Endothelial cell of umbilical vein (primary cell): ENCODE measurements at regions of chr10 and their contacts with region 1.

Region 1: GRCh38 chr10:23994479-23995046 is 214.4 kb upstream of the KIAA1217 start:
- DNase-seq: peak; percentile 4
- H3K4me3 ChIP-seq: no peak overlapping the region
- H3K27ac ChIP-seq: no peak overlapping the region
- H3K4me1 ChIP-seq: no peaks in the 10 kb centered on the region
- H3K27me3 ChIP-seq: no peaks in the 10 kb centered on the region
- CTCF ChIP-seq: peak; percentile 61
- POLR2A ChIP-seq: no peak

Region 2: GRCh38 chr10:23968301-23968700 is 26.3 kb before region 1 on chr10:
- CTCF ChIA-PET with region 1: no interaction called
- POLR2A ChIA-PET with region 1: no interaction called
- dilution Hi-C with region 1: no loop called
- intact Hi-C with region 1: no loop called
- DNase-seq: no peak
- H3K4me3 ChIP-seq: no peak overlapping the region
- H3K27ac ChIP-seq: no peak overlapping the region
- H3K4me1 ChIP-seq: no peaks in the 10 kb centered on the region
- H3K27me3 ChIP-seq: no peaks in the 10 kb centered on the region
- CTCF ChIP-seq: no peak
- POLR2A ChIP-seq: no peak

Region 3: DNA sequence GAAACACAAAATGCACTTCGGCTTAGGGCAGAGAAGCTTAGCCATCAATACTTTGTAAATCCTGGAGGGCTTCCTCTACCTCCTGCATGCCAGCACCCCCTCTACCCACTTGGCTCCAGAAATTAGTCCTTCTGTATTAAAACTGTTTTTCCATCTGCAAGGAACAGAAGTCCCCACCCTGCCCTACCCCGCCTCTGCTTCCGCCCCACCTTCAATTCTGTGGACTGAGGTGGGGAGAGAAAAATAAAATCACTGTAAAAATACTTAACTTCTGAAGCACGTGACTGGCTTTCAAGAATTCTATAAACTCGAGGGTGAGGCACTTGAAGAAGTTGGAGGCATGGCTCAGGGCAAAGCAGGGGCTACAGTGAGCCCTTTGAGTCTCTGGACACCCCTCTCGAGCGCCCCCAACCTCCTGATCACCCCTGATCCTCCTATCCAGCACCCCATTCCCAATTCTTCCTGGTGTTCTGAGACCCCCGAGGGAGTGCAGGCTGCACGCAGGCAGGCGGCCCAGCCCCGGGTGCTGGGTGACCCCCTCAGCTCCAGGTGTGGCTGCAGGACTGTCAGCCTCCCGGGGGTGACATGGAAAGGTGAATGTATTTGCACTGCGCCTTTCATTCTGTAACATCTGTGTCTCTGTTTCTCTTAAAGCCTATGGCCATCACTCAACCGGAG is 207.1 kb after region 1 on chr10:
- CTCF ChIA-PET with region 1: interaction called, 5 read pairs
- POLR2A ChIA-PET with region 1: no interaction called
- dilution Hi-C with region 1: no loop called
- intact Hi-C with region 1: loop called (anchors 1 kb)
- DNase-seq: no peak
- H3K4me3 ChIP-seq: no peak overlapping the region
- H3K27ac ChIP-seq: no peak overlapping the region
- H3K4me1 ChIP-seq: no peaks in the 10 kb centered on the region
- H3K27me3 ChIP-seq: no peaks in the 10 kb centered on the region
- CTCF ChIP-seq: no peak
- POLR2A ChIP-seq: no peak

Region 4: GRCh38 chr10:24360282-24361127 is 365.9 kb after region 1 on chr10:
- CTCF ChIA-PET with region 1: interaction called, 12 read pairs
- POLR2A ChIA-PET with region 1: no interaction called
- dilution Hi-C with region 1: no loop called
- intact Hi-C with region 1: loop called (anchors 1 kb)
- DNase-seq: peak; percentile 10
- H3K4me3 ChIP-seq: no peak overlapping the region
- H3K27ac ChIP-seq: no peak overlapping the region
- H3K4me1 ChIP-seq: no peaks in the 10 kb centered on the region
- H3K27me3 ChIP-seq: no peaks in the 10 kb centered on the region
- CTCF ChIP-seq: peak; percentile 31 to 39
- POLR2A ChIP-seq: no peak

Region 5: DNA sequence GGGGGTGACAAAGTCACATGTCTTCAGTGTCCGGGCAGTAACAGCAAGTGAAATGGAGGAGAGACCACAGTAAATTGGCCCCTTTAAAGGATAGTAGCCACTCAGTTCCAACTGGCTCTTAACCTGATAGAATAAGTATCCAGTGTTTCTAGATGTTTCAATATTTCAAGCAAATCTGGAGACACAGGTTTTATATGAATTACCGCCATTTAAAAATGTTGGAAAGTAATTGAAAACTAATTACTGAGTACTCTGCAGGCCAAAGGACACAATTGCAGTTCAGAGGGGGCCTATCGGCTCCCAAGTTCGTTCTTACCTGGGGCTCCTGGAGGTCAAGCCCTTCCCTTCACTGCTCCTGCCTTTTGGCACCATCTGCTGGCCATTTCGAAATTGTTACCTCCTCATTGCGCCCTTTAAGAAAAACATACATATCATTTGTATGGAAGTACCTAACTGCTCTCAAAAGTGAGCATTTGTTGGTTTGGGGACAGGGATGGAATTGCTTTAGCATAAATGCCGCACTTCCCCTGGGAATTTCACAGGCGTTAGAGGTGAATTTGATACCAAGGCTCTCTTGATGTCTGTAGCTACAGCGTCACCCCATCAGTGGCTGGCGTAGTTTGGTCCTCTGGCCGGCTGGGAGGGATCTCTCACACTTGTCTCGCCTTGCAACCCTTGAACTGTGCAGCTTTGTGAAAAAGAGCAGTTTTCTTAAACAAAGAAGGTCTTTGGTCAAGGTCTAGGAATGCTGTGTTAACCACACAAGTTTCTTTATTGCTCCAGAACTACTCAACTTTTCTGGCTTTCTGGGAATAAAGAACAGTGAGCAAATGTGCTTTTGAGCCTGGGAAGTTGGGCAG is 509.1 kb after region 1 on chr10:
- CTCF ChIA-PET with region 1: interaction called, 6 read pairs
- POLR2A ChIA-PET with region 1: no interaction called
- dilution Hi-C with region 1: no loop called
- intact Hi-C with region 1: loop called (anchors 5 kb)
- DNase-seq: peak; percentile 33
- H3K4me3 ChIP-seq: no peak overlapping the region
- H3K27ac ChIP-seq: no peak overlapping the region
- H3K4me1 ChIP-seq: no peaks in the 10 kb centered on the region
- H3K27me3 ChIP-seq: peaks cover 0 to 2% of the 10 kb centered on the region in 2 experiments
- CTCF ChIP-seq: peak; percentile 34 to 42
- POLR2A ChIP-seq: no peak

Region 6: GRCh38 chr10:24513155-24513554 is 518.6 kb after region 1 on chr10:
- CTCF ChIA-PET with region 1: interaction called, 12 read pairs
- POLR2A ChIA-PET with region 1: no interaction called
- dilution Hi-C with region 1: no loop called
- intact Hi-C with region 1: no loop called
- DNase-seq: no peak
- H3K4me3 ChIP-seq: no peak overlapping the region
- H3K27ac ChIP-seq: no peak overlapping the region
- H3K4me1 ChIP-seq: no peaks in the 10 kb centered on the region
- H3K27me3 ChIP-seq: no peaks in the 10 kb centered on the region
- CTCF ChIP-seq: peak; percentile 12 to 13
- POLR2A ChIP-seq: no peak

Region 7: DNA sequence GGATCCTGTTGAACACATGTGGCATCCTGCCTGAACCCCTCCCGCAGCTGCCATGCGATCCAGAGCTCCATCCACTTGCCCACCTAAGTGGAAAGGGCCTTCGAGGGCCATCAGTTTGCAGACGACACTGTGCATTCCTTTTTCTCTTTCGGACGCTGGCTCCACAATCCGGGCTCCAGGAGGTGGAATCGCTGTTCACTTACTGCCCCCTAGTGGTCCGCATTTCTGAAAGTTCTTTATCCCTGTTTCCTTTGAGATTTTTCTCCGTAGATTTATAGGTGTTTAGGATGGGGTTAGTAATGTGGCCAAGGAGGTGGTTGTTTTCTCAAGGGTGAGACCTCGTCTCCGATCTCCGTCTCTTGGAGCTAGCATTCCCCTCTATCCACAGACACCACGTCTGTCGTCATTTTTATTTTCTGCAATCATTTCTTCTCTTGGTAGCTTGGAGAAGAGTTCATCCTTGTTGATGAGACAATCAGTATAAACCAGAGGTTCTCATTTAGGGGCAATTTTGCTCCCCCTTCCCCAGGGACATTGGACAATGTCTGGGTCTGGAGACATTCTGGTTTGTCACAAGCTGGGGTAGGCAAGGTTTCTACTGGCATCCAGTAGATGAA is 524.5 kb after region 1 on chr10:
- CTCF ChIA-PET with region 1: interaction called, 12 read pairs
- POLR2A ChIA-PET with region 1: no interaction called
- dilution Hi-C with region 1: no loop called
- intact Hi-C with region 1: loop called (anchors 1 kb)
- DNase-seq: peak; percentile 50
- H3K4me3 ChIP-seq: no peak overlapping the region
- H3K27ac ChIP-seq: no peak overlapping the region
- H3K4me1 ChIP-seq: no peaks in the 10 kb centered on the region
- H3K27me3 ChIP-seq: no peaks in the 10 kb centered on the region
- CTCF ChIP-seq: peak; percentile 72 to 76
- POLR2A ChIP-seq: no peak